Left lung (tissue), 14 donors: ENCODE measurements at regions of chr11 and their contacts with region 1.

Region 1: GRCh38 chr11:77187776-77188632 is 60.0 kb downstream of the MYO7A start:
- DNase-seq: peak; percentile 75 to 89 (median 82)
- ATAC-seq: peak; percentile 81
- H3K4me3 ChIP-seq: no peak overlapping the region
- H3K27ac ChIP-seq: no peak overlapping the region
- H3K4me1 ChIP-seq: no peaks in the 10 kb centered on the region
- H3K27me3 ChIP-seq: peaks cover 0 to 5% of the 10 kb centered on the region in 2 donors
- CTCF ChIP-seq: peak; percentile 83 to 90

Region 2: GRCh38 chr11:76850815-76851214 is 337.2 kb before region 1 on chr11:
- intact Hi-C with region 1: no loop called
- DNase-seq: no peak
- ATAC-seq: peak; percentile 30
- H3K4me3 ChIP-seq: no peak overlapping the region
- H3K27ac ChIP-seq: no peak overlapping the region
- H3K4me1 ChIP-seq: peaks cover 0 to 12% of the 10 kb centered on the region in 2 donors
- H3K27me3 ChIP-seq: no peaks in the 10 kb centered on the region
- CTCF ChIP-seq: no peak

Region 3: GRCh38 chr11:77127232-77127911 is 60.6 kb before region 1 on chr11:
- intact Hi-C with region 1: loop called in 1 of 2 experiments (anchors 5 kb)
- DNase-seq: peak in 3 of 4 donors; percentile 57 to 87 (median 58)
- ATAC-seq: peak; percentile 87
- H3K4me3 ChIP-seq: peak overlapping the region; percentile 9 to 19
- H3K27ac ChIP-seq: no peak overlapping the region
- H3K4me1 ChIP-seq: peaks cover 16% of the 10 kb centered on the region in 2 donors
- H3K27me3 ChIP-seq: peaks cover 0 to 28% of the 10 kb centered on the region in 2 donors
- CTCF ChIP-seq: peak; percentile 95 to 100

Region 4: DNA sequence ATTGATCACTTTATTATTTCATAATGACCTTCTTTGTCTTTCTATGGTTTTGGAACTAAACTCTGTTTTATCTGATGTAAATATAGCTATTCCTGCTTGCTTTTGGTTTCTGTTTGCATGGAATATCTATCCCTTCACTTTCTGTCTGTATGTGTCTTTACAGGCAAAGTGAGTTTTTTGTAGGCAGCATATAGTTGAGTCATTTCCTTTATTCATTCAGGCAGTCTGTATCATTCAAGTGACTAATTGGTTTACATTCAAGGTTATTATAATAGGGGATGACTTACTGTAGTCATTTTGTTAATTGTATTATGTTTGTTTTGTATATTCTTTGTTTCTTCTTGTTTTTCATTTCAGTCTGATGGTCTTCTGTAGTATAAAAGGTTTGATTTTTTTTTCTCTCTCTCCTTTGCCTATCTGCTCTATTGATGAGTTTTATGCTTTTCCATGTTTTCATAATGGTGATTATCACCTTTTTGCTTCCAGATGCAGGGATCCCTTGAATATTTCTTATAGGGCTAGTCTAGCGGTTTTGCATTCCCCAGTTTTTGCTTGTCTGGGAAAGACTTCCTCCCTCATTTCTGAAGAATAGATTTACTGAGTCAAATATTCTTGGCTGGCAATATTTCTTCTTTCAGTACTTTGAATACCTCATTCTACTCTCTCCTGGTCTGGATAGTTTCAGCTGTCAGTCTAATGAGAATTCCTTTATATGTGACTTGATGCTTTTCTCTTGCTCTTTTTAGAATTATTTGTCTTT is 63.1 kb after region 1 on chr11:
- intact Hi-C with region 1: no loop called
- DNase-seq: no peak
- ATAC-seq: no peak
- H3K4me3 ChIP-seq: no peak overlapping the region
- H3K27ac ChIP-seq: no peak overlapping the region
- H3K4me1 ChIP-seq: no peaks in the 10 kb centered on the region
- H3K27me3 ChIP-seq: no peaks in the 10 kb centered on the region
- CTCF ChIP-seq: no peak